Activated naive CD4-positive, alpha-beta T cell treated with anti-CD3 and anti-CD28 coated beads for 36 hours (primary cell): ENCODE measurements at regions of chr12 and their contacts with region 1.

Region 1: GRCh38 chr12:57611108-57611809 is at the start of gene ARHGEF25:
- DNase-seq: peak; percentile 58
- H3K4me3 Mint-ChIP-seq: peak within 1 kb of the TSS; percentile 65
- H3K27ac Mint-ChIP-seq: no peak within 1 kb of the TSS
- H3K4me1 Mint-ChIP-seq: peaks cover 9% of the 10 kb centered on the region
- H3K27me3 Mint-ChIP-seq: peaks cover 19% of the 10 kb centered on the region
- total RNA-seq, gene ARHGEF25: 1.4 to 1.5 TPM

Region 2: GRCh38 chr12:57621497-57622292 is 10.4 kb after region 1 on chr12:
- CTCF ChIA-PET with region 1: interaction called, 12 read pairs
- intact Hi-C with region 1: no loop called
- DNase-seq: peak; percentile 65
- H3K4me3 Mint-ChIP-seq: peak overlapping the region; percentile 71
- H3K27ac Mint-ChIP-seq: no peak overlapping the region
- H3K4me1 Mint-ChIP-seq: peaks cover 27% of the 10 kb centered on the region
- H3K27me3 Mint-ChIP-seq: peaks cover 86% of the 10 kb centered on the region

Region 3: GRCh38 chr12:57965766-57966165 is 354.5 kb after region 1 on chr12:
- CTCF ChIA-PET with region 1: no interaction called
- intact Hi-C with region 1: no loop called
- DNase-seq: no peak
- H3K4me3 Mint-ChIP-seq: no peak overlapping the region
- H3K27ac Mint-ChIP-seq: no peak overlapping the region
- H3K4me1 Mint-ChIP-seq: no peaks in the 10 kb centered on the region
- H3K27me3 Mint-ChIP-seq: no peaks in the 10 kb centered on the region